Endothelial cell of umbilical vein (primary cell): ENCODE measurements at regions of chr7 and their contacts with region 1.

Region 1: DNA sequence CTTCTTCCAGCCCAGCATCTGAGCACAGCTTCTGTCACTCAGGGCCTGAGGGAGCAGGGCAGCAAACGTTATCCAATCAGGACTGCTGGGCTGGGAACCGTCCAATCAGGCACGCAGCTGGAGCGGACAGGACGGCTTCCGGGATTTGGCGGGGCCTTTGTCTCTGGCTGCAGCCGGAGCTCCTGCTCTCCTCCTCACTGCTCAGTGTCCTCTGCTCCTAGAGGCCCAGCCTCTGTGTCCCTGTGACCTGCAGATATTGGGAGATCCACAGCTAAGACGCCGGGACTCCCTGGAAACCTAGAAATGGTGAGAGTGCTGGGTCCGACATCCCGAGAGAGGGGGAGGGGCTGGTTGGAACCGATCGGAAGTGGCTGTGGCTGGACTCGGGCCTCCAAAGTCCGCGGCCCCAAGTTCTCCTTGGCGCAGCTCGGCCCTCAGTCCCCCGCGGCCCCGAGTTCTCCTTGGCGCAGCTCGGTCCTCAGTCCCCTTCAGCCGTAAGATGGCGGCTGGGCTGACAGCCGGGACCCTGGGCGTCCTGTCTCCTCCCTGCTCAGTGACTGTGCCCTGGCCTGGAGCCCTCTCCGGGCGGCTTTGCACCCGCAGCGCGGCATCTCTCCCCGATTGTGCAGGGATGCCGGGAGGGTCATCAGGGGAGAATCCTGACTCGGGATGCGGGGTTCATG is at the start of gene ZNF107:
- DNase-seq: peak; percentile 91
- H3K4me3 ChIP-seq: peak within 1 kb of the TSS; percentile 84 to 93 (median 87)
- H3K27ac ChIP-seq: peak within 1 kb of the TSS; percentile 68
- H3K4me1 ChIP-seq: peaks cover 8% of the 10 kb centered on the region
- H3K27me3 ChIP-seq: no peaks in the 10 kb centered on the region
- CTCF ChIP-seq: no peak
- POLR2A ChIP-seq: peak; percentile 47
- total RNA-seq, gene ZNF107: 5.6 and 5.8 TPM in 2 replicates

Region 2: GRCh38 chr7:64562626-64563275 is 103.4 kb before region 1 on chr7 and contains the start of gene ZNF680:
- CTCF ChIA-PET with region 1: no interaction called
- POLR2A ChIA-PET with region 1: interaction called, 7 read pairs
- dilution Hi-C with region 1: no loop called
- intact Hi-C with region 1: loop called (anchors 1 kb)
- DNase-seq: peak; percentile 96
- H3K4me3 ChIP-seq: peak within 1 kb of the TSS; percentile 70 to 90 (median 86)
- H3K27ac ChIP-seq: peak within 1 kb of the TSS; percentile 89
- H3K4me1 ChIP-seq: no peaks in the 10 kb centered on the region
- H3K27me3 ChIP-seq: no peaks in the 10 kb centered on the region
- CTCF ChIP-seq: no peak
- POLR2A ChIP-seq: peak; percentile 68
- total RNA-seq, gene ZNF680: 10.8 and 11.5 TPM in 2 replicates

Region 3: GRCh38 chr7:64599355-64599754 is 66.8 kb before region 1 on chr7:
- CTCF ChIA-PET with region 1: no interaction called
- POLR2A ChIA-PET with region 1: no interaction called
- dilution Hi-C with region 1: no loop called
- intact Hi-C with region 1: no loop called
- DNase-seq: no peak
- H3K4me3 ChIP-seq: no peak overlapping the region
- H3K27ac ChIP-seq: no peak overlapping the region
- H3K4me1 ChIP-seq: no peaks in the 10 kb centered on the region
- H3K27me3 ChIP-seq: no peaks in the 10 kb centered on the region
- CTCF ChIP-seq: no peak
- POLR2A ChIP-seq: no peak

Region 4: GRCh38 chr7:64794171-64794844 is 128.2 kb after region 1 on chr7 and contains the start of gene ZNF138:
- CTCF ChIA-PET with region 1: no interaction called
- POLR2A ChIA-PET with region 1: no interaction called
- dilution Hi-C with region 1: no loop called
- intact Hi-C with region 1: loop called (anchors 1 kb)
- DNase-seq: peak; percentile 95
- H3K4me3 ChIP-seq: peak within 1 kb of the TSS; percentile 80 to 92 (median 90)
- H3K27ac ChIP-seq: peak within 1 kb of the TSS; percentile 78
- H3K4me1 ChIP-seq: peaks cover 3% of the 10 kb centered on the region
- H3K27me3 ChIP-seq: no peaks in the 10 kb centered on the region
- CTCF ChIP-seq: no peak
- POLR2A ChIP-seq: peak; percentile 60
- total RNA-seq, gene ZNF138: 3.3 and 4.4 TPM in 2 replicates